A549 (cell line): ENCODE measurements at regions of chr9 and their contacts with region 1.

Region 1: GRCh38 chr9:94783102-94783664 is 56.7 kb downstream of the AOPEP start:
- DNase-seq: peak; percentile 80 to 100
- ATAC-seq: peak; percentile 96 to 100
- H3K4me3 ChIP-seq: no peak overlapping the region
- H3K27ac ChIP-seq: peak overlapping the region; percentile 86 to 91
- H3K4me1 ChIP-seq: peaks cover 60% of the 10 kb centered on the region
- CTCF ChIP-seq: peak; percentile 88
- EP300 ChIP-seq: peak; percentile 100
- POLR2A ChIP-seq: no peak
- RAD21 ChIP-seq: peak; percentile 98 to 100

Region 2: GRCh38 chr9:94746541-94747370 is 36.4 kb before region 1 on chr9:
- CTCF ChIA-PET with region 1: no interaction called
- POLR2A ChIA-PET with region 1: no interaction called
- DNase-seq: no peak
- ATAC-seq: no peak
- H3K4me3 ChIP-seq: no peak overlapping the region
- H3K27ac ChIP-seq: no peak overlapping the region
- H3K4me1 ChIP-seq: no peaks in the 10 kb centered on the region
- CTCF ChIP-seq: no peak
- EP300 ChIP-seq: no peak
- POLR2A ChIP-seq: no peak
- RAD21 ChIP-seq: no peak

Region 3: DNA sequence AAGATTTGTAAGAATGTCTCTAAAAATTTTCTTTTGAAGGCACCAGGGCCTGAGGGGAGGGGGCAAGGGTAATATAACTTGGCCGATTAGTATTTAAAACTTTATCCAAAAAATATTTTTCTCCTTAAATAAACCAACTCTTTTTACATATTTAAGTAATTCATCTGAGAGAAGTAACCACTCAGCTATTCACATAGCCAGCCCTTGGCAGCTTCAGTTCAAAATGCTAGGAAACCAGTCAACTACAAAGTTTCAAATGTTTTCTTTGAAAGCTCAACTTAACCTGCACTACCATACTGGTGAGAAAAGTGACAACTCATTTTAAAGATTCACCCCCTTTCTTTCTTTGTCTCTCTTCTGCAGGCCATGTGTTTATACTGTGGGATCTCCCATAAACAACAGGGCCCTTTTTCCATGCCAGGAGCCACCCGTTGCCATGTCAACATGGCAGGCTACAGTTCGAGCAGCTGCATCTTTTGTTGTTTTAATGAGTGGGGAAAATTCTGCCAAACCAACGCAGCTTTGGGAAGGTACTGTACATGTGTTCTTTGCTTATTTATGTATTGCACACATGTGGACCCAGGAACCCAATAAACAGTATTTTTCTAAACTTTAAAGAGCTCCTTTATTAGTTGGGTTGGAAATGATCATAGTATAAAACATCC is 10.4 kb before region 1 on chr9:
- CTCF ChIA-PET with region 1: interaction called, 10 read pairs
- POLR2A ChIA-PET with region 1: no interaction called
- DNase-seq: no peak
- ATAC-seq: no peak
- H3K4me3 ChIP-seq: no peak overlapping the region
- H3K27ac ChIP-seq: no peak overlapping the region
- H3K4me1 ChIP-seq: no peaks in the 10 kb centered on the region
- CTCF ChIP-seq: no peak
- EP300 ChIP-seq: no peak
- POLR2A ChIP-seq: no peak
- RAD21 ChIP-seq: no peak

Region 4: GRCh38 chr9:94867281-94867841 is 84.2 kb after region 1 on chr9:
- CTCF ChIA-PET with region 1: interaction called, 33 read pairs
- POLR2A ChIA-PET with region 1: interaction called, 25 read pairs
- DNase-seq: peak; percentile 87 to 99
- ATAC-seq: peak; percentile 86 to 94
- H3K4me3 ChIP-seq: no peak overlapping the region
- H3K27ac ChIP-seq: peak overlapping the region; percentile 94 to 97
- H3K4me1 ChIP-seq: peaks cover 83% of the 10 kb centered on the region
- CTCF ChIP-seq: no peak
- EP300 ChIP-seq: peak; percentile 95 to 97
- POLR2A ChIP-seq: no peak
- RAD21 ChIP-seq: peak; percentile 60 to 70

Region 5: DNA sequence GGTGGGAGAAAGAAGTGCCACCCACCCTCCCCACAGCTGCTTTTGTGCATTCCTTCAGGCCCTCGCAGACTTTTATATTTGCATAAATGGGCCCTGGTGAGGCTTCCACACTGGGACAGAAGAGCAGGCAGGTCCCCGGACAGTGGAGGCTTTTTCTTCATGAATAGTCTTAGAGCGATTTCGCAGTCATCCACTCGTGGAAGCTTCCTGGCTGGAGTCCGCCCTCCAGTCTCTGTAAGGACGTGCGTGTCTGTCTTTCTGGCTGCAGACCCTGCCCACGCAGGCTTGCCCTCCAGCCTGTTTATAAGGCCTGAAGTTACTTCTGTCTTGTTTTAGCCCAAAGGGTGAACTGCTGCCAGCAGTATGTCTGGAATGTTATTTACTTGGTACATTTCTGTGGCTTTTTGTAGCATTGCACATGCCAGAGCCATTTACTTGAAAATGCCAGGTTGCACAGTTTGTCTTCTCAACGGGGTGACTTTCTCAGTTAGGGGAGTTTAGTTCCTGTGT is 139.0 kb after region 1 on chr9:
- CTCF ChIA-PET with region 1: interaction called, 64 read pairs
- POLR2A ChIA-PET with region 1: interaction called, 11 read pairs
- DNase-seq: peak in 1 of 2 experiments; percentile 93
- ATAC-seq: peak; percentile 42 to 59; a peak in 5 of 6 replicates
- H3K4me3 ChIP-seq: peak overlapping the region; percentile 27
- H3K27ac ChIP-seq: peak overlapping the region; percentile 97 to 99
- H3K4me1 ChIP-seq: peaks cover 90% of the 10 kb centered on the region
- CTCF ChIP-seq: no peak
- EP300 ChIP-seq: peak; percentile 79 to 90; a peak in 3 of 5 replicates
- POLR2A ChIP-seq: no peak
- RAD21 ChIP-seq: peak; percentile 39 to 54; a peak in 3 of 5 replicates

Region 6: GRCh38 chr9:95018099-95018936 is 235.1 kb after region 1 on chr9:
- CTCF ChIA-PET with region 1: interaction called, 31 read pairs
- POLR2A ChIA-PET with region 1: interaction called, 6 read pairs
- DNase-seq: peak; percentile 65 to 87
- ATAC-seq: peak; percentile 65 to 80
- H3K4me3 ChIP-seq: peak overlapping the region; percentile 22; the same call in 2 of the 3 replicates
- H3K27ac ChIP-seq: peak overlapping the region; percentile 86 to 99
- H3K4me1 ChIP-seq: peaks cover 99% of the 10 kb centered on the region
- CTCF ChIP-seq: no peak
- EP300 ChIP-seq: peak; percentile 22 to 54; a peak in 2 of 5 replicates
- POLR2A ChIP-seq: peak; percentile 17; the same call in 1 of the 2 replicates
- RAD21 ChIP-seq: 0 out of 5 replicates have a peak, but pooled peaks of 1 of the 2 experiments have one; percentile 15

Region 7: DNA sequence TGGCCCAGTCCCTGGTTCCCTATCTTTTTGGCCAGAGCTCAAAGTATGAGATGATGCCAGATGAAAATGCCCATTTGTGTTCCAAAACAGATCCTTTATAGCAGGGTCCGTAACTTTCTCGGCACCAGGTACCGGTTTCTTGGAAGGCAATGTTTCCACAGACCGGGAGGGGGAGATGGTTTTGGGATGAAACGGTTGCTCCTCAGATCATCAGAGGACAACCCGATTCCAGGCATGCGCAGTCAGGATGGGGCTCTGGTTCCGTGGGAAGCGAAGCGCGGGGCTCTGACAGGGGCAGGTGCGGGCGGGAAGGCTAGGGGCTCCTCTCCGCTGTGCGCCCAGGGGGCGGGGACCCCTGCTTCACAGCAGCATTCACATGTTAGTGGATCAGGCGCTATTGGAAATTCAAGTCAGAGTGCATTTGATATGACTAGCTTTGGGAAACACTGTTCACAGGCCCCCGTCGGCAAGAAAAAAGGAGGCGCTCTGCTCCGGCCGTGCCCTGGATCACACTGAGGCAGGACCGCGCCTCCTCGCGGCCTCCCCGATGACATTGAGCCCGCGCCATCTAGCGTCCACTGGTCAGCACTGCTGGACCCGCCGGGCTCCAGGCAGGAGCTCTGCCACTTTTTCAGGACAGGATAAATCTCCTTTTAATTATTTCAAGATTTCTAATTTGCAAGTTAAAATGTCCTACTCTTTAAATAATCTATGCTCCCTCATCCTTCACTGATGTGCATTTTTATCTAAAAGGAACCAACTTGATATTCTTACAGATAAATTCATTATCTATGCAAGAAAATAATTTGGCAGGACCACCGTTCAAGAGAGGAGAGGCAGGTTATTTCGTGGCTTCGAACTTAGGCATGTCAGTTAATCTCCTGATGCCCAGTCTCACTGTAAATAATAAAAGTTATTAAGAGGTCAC is 344.3 kb after region 1 on chr9:
- CTCF ChIA-PET with region 1: interaction called, 26 read pairs
- POLR2A ChIA-PET with region 1: no interaction called
- DNase-seq: peak; percentile 74 to 76
- ATAC-seq: peak; percentile 90 to 91
- H3K4me3 ChIP-seq: no peak overlapping the region
- H3K27ac ChIP-seq: peak overlapping the region; percentile 37 to 72; a peak in 5 of 6 replicates
- H3K4me1 ChIP-seq: peaks cover 33% of the 10 kb centered on the region
- CTCF ChIP-seq: peak; percentile 95
- EP300 ChIP-seq: no peak
- POLR2A ChIP-seq: no peak
- RAD21 ChIP-seq: peak; percentile 86 to 92